IMR-90 (cell line): ENCODE measurements at regions of chr20 and their contacts with region 1.

Region 1: DNA sequence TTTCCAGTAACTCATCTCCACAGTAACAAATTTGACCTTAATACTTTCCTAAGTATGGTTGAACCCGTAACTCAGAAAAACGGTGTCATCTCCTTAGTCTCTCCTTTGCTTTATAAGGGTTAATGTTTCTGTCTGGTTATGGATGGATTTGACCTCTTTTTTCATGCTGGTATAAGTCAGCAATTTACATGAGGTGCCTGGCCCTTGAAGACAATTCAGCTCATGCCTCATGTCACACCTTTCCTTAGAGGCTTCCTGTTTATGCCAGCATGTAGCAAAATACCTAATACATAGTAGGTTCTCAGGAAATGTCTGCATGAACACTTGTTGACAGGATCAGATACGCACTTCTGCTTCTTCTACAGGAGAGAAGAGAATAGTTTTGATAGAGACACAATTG is 37.7 kb upstream of the C20orf144 start:
- DNase-seq: no peak
- ATAC-seq: no peak
- H3K4me3 ChIP-seq: no peak overlapping the region
- H3K27ac ChIP-seq: no peak overlapping the region
- H3K4me1 ChIP-seq: no peaks in the 10 kb centered on the region
- H3K27me3 ChIP-seq: no peaks in the 10 kb centered on the region
- CTCF ChIP-seq: no peak
- POLR2A ChIP-seq: no peak
- RAD21 ChIP-seq: no peak

Region 2: DNA sequence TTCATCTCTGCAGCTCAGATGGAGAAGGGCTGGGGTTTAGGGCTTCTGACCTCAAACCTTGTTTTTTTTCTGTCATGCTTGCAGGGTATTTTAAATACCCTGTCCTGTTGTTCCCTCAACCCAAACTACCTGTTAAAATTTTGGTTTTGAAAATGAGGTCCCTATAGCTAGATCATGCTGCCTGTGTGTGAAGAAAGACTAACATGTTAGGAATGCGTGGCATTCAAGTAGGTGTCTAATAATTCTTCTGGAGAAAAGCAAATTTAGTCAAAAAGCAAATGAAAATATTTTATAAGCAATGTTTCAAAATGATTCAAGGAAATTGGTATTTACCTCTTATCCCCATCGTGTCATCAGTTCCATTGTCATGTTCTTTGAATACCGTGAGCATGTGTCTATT is 39.4 kb before region 1 on chr20:
- CTCF ChIA-PET with region 1: no interaction called
- POLR2A ChIA-PET with region 1: no interaction called
- dilution Hi-C with region 1: no loop called
- in situ Hi-C with region 1: no loop called
- intact Hi-C with region 1: loop called (anchors 5 kb)
- DNase-seq: no peak
- ATAC-seq: peak; percentile 14; the same call in 1 of the 2 replicates
- H3K4me3 ChIP-seq: no peak overlapping the region
- H3K27ac ChIP-seq: no peak overlapping the region
- H3K4me1 ChIP-seq: no peaks in the 10 kb centered on the region
- H3K27me3 ChIP-seq: no peaks in the 10 kb centered on the region
- CTCF ChIP-seq: no peak
- POLR2A ChIP-seq: no peak
- RAD21 ChIP-seq: no peak